ENCODE measurements at regions of chr6 and their contacts with region 1.

Region 1: DNA sequence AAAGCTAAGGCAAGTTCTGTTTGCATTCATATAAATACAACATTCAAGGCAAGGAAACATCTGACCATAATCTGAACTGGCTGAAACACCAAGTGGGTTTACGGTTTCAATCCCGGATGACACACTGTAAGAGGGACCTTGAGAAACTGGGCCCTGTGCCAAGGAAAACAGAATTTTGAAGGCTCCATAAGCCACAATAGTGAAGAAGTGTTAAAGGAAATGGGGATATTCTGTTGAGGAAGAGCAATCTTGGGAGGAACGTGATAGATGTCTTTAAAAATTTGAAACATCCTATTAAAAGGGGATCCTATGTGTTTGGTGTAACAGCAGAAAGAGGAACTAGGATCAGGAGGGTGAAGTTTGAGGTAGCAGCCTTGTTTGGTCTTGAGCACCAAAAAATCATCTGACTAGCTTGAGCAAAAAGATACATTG is 82.4 kb upstream of the TAB2 start:
- DNase-seq: peak in 4 of 6 donors; percentile 39 to 74 (median 60)
- ATAC-seq: peak; percentile 70 to 81 (median 74)
- H3K4me3 ChIP-seq: no peak overlapping the region
- H3K27ac ChIP-seq: peak overlapping the region in 1 of 4 donors; percentile 30
- H3K4me1 ChIP-seq: peaks cover 13 to 45% (median 25%) of the 10 kb centered on the region in 3 donors
- H3K27me3 ChIP-seq: no peaks in the 10 kb centered on the region
- CTCF ChIP-seq: no peak

Region 2: GRCh38 chr6:149094156-149094555 is 141.0 kb before region 1 on chr6:
- intact Hi-C with region 1: loop called in 1 of 3 experiments (anchors 10 kb)
- DNase-seq: no peak
- ATAC-seq: peak in 2 of 4 donors; percentile 35 to 70
- H3K4me3 ChIP-seq: no peak overlapping the region
- H3K27ac ChIP-seq: no peak overlapping the region
- H3K4me1 ChIP-seq: peaks cover 0 to 4% (median 0%) of the 10 kb centered on the region in 3 donors
- H3K27me3 ChIP-seq: no peaks in the 10 kb centered on the region
- CTCF ChIP-seq: no peak

Measured in pancreas (tissue), 10 donors.